Activated CD8-positive, alpha-beta memory T cell treated with anti-CD3 and anti-CD28 coated beads, Interleukin-2, amount 10 ng/mL, durations not matched to agents 7 days and 5 days (primary cell): ENCODE measurements at regions of chr17 and their contacts with region 1.

Region 1: GRCh38 chr17:78082988-78083387 is 45.6 kb downstream of the TMC6 start:
- DNase-seq: no peak
- ATAC-seq: no peak
- H3K4me3 Mint-ChIP-seq: no peak overlapping the region
- H3K27ac Mint-ChIP-seq: no peak overlapping the region
- H3K4me1 Mint-ChIP-seq: peaks cover 12% of the 10 kb centered on the region
- H3K27me3 Mint-ChIP-seq: no peaks in the 10 kb centered on the region

Region 2: DNA sequence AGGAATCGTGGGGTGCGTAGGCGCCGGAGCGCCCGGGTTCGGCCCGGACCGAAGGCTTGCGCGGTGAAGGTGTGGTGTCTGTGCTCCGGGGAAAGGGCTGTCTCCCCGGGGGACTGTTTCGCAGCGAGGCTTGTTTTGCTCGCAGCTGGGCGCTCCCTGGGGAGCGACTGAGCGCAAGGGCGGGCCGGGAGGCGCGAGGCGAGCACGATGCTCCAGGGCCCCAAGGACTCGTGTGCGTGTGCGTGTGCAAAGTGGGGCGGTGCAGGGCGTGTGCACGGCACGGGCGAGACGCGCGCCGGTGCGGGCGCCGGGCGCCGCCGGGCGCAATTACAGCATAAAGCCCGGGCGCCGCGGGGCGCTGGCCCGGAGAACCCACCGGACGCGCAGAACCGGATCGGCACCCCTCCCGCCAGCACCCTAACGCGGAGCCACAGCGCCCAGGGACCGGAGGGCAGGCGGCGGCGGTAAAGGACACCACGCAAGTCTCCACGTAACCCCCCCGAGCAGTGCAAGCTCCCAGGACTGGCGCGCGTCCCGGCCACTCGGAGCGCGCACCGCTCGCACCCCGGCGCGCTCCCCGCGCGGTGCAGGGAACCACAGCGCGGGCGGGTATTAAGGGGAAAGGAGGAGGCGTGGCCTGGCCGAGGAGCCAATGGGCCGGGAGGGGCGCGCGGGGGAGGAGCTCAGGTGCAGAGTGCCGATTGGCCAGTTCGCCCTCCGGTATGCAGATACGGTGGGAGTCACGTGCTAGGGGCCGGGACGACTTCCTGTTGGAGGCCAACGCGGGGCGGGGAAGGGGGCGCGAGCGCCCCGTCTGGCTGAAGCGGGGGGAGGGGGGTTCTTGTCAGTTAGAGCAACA is 124.9 kb before region 1 on chr17 and contains the start of gene TNRC6C:
- CTCF ChIA-PET with region 1: no interaction called
- DNase-seq: peak; percentile 100
- ATAC-seq: peak; percentile 91
- H3K4me3 Mint-ChIP-seq: peak within 1 kb of the TSS; percentile 84
- H3K27ac Mint-ChIP-seq: peak within 1 kb of the TSS; percentile 75
- H3K4me1 Mint-ChIP-seq: peaks cover 36% of the 10 kb centered on the region
- H3K27me3 Mint-ChIP-seq: peaks cover 34% of the 10 kb centered on the region
- total RNA-seq, gene TNRC6C: 24.9 to 39.3 TPM

Region 3: DNA sequence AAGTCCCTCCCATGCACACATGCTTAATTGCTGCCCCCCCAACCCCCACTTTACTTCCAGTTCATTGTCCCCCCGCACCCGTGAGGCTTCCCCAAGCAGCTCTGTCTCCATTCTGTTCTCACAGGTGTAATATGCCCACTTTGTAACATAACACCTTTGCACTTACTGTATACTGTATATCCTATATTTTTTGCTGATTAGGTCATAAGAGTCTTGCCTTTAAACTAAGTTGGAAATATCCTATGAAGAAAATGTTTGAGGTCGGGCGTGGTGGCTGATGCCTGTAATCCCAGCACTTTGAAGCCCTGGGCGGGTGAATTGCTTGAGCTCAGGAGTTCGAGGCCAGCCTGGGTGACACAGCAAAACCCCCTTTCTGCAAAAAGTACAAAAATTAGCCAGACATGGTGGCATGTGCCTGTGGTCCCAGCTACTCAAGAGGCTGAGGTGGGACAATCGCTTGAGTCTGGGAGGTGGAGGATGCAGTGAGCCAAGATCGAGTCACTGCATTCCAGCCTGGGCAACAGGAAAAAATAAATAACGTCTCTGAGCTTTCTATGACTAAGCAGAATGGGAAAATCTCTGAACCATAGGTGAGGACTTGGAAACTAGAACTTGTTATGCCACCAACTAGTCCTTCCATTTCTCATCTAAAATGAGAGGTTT is 48.4 kb before region 1 on chr17:
- CTCF ChIA-PET with region 1: no interaction called
- DNase-seq: no peak
- ATAC-seq: no peak
- H3K4me3 Mint-ChIP-seq: no peak overlapping the region
- H3K27ac Mint-ChIP-seq: no peak overlapping the region
- H3K4me1 Mint-ChIP-seq: no peaks in the 10 kb centered on the region
- H3K27me3 Mint-ChIP-seq: no peaks in the 10 kb centered on the region

Region 4: DNA sequence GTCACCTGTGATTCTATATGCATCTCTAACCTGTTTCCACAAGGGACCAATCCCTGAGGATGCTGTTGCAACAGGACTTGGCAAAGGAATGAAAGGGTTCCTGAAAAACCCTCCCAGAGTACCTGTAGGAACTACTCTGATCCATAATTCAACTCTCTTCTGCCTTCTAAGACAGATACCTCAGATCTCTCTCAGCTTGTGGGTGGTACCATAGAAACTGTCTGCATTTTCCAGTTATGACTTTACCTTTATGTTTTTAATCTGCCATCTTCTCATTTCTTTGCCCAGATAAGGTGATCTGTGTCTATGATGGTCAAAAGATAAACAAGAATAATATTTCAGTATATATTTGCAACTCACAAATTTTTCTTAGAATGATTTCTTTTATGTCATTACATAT is 19.5 kb before region 1 on chr17:
- CTCF ChIA-PET with region 1: interaction called, 10 read pairs
- DNase-seq: no peak
- ATAC-seq: peak; percentile 39
- H3K4me3 Mint-ChIP-seq: no peak overlapping the region
- H3K27ac Mint-ChIP-seq: no peak overlapping the region
- H3K4me1 Mint-ChIP-seq: peaks cover 10% of the 10 kb centered on the region
- H3K27me3 Mint-ChIP-seq: no peaks in the 10 kb centered on the region

Region 5: DNA sequence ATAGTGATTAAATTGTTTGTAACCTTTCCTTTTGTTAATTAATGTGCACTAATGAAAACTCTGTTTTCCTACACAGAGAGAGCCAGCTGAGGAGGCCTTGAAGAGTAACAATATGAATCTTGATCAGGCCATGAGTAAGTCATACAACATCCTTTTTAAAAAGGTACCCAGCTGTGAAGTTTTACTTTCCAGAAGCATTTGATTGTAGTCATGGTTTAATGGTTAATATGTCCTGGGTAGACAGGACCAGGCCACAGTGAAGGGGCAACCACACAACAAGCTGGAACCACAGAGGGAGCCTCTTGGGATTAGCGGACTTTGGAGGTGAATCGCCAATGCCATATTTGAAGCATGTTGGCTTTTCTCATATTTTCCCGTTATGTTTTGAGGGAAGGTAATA is 10.0 kb before region 1 on chr17:
- CTCF ChIA-PET with region 1: interaction called, 11 read pairs
- DNase-seq: no peak
- ATAC-seq: no peak
- H3K4me3 Mint-ChIP-seq: no peak overlapping the region
- H3K27ac Mint-ChIP-seq: no peak overlapping the region
- H3K4me1 Mint-ChIP-seq: no peaks in the 10 kb centered on the region
- H3K27me3 Mint-ChIP-seq: no peaks in the 10 kb centered on the region

Region 6: DNA sequence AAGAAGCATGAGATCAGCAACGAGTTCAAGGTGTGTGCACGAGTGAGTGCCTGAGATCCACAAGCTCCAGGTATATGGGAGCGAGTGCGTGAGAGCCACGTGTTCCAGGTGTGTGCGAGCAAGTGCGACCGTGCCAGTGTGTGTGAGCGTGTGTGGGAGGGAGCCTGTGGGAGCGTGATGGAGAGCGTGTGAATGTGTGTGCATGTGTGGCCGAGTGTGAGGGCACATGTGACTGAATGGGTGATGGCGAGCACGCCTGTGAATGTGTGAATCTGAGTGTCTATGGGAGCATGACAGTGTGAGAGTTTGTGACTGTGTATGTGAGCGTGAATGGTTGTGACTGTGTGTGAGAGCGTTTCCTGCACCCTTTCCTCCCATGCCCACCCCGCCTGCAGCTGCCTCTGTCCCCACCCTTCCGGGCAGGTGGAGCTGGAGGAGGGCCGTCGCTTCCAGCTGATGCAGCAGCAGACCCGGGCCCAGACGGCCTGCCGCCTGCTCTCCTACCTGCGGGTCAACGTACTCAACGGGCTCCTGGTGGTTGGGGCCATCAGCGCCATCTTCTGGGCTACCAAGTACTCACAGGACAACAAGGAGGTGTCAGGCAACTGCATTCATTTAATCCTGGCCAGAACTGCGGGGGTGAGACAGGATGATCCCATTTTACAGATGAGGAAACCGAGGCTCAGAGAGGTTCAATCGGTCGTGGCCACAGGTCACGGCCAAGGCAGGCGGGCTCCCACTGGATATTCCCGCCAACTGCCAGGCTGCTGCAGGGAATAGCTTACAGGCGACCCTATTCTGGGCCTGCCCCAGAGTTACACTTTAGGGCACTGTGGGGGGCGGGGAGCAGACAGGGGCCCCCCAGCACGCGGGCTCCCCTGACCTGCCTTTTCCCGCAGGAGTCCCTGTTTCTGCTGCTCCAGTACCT is 51.2 kb after region 1 on chr17:
- CTCF ChIA-PET with region 1: interaction called, 14 read pairs
- DNase-seq: peak; percentile 89
- ATAC-seq: peak; percentile 18
- H3K4me3 Mint-ChIP-seq: peak overlapping the region; percentile 72
- H3K27ac Mint-ChIP-seq: peak overlapping the region; percentile 81
- H3K4me1 Mint-ChIP-seq: peaks cover 76% of the 10 kb centered on the region
- H3K27me3 Mint-ChIP-seq: no peaks in the 10 kb centered on the region